OCI-LY7 (cell line): ENCODE measurements at regions of chr11 and their contacts with region 1.

Region 1: GRCh38 chr11:98289617-98290263 is 731.0 kb upstream of the CNTN5 start:
- DNase-seq: no peak
- H3K4me3 ChIP-seq: no peak overlapping the region
- H3K27ac ChIP-seq: no peak overlapping the region
- H3K4me1 ChIP-seq: no peaks in the 10 kb centered on the region
- CTCF ChIP-seq: no peak

Region 2: GRCh38 chr11:98227276-98227675 is 62.5 kb before region 1 on chr11:
- CTCF ChIA-PET with region 1: no interaction called
- POLR2A ChIA-PET with region 1: no interaction called
- intact Hi-C with region 1: loop called (anchors 2 kb)
- DNase-seq: no peak
- H3K4me3 ChIP-seq: no peak overlapping the region
- H3K27ac ChIP-seq: no peak overlapping the region
- H3K4me1 ChIP-seq: no peaks in the 10 kb centered on the region
- CTCF ChIP-seq: no peak